ENCODE measurements at regions of chr11 and their contacts with region 1.

Region 1: GRCh38 chr11:9943386-9944110 is 279.7 kb downstream of the SWAP70 start:
- DNase-seq: peak; percentile 46
- H3K4me3 ChIP-seq: no peak overlapping the region
- H3K27ac ChIP-seq: no peak overlapping the region
- H3K4me1 ChIP-seq: no peaks in the 10 kb centered on the region
- H3K27me3 ChIP-seq: no peaks in the 10 kb centered on the region
- CTCF ChIP-seq: no peak

Region 2: GRCh38 chr11:9851366-9851765 is 92.2 kb before region 1 on chr11:
- CTCF ChIA-PET with region 1: no interaction called
- dilution Hi-C with region 1: no loop called
- in situ Hi-C with region 1: no loop called
- intact Hi-C with region 1: no loop called
- DNase-seq: peak; percentile 58
- H3K4me3 ChIP-seq: no peak overlapping the region
- H3K27ac ChIP-seq: no peak overlapping the region
- H3K4me1 ChIP-seq: no peaks in the 10 kb centered on the region
- H3K27me3 ChIP-seq: no peaks in the 10 kb centered on the region
- CTCF ChIP-seq: no peak

Region 3: DNA sequence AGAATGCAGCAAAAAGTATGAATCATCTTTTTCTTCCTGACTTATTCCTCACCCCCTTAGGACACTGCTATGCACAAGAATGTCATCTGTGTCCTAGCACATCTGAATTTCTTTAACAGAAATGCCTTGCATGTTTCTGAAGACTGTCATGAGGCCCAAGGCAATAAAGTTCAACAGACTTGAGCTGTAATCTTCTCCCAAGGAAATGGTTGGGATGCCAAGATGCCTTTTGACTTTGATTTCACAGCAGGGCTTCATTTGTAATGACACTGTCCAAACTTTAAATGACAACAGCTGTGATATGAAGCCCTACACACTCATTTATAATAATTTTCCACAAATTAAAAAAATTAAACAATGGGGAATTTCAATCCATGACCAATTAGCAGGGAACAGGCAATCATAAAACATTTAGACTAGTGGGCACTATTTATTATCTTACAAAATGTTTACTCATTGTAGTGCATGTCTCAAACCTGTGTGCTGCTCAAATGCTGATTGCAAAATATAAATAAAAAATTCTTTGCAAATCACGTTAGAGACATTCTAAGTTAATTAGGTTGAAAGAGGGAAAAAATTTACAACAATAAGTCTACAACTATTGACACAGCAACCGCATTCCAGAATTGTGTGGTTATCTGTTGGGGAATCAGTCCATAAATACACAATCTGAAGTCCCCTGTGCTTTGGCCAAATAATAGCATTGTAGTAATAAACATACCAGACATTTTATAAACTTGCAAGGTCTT is 37.3 kb before region 1 on chr11:
- CTCF ChIA-PET with region 1: no interaction called
- dilution Hi-C with region 1: no loop called
- in situ Hi-C with region 1: no loop called
- intact Hi-C with region 1: loop called (anchors 2 kb)
- DNase-seq: peak; percentile 81
- H3K4me3 ChIP-seq: no peak overlapping the region
- H3K27ac ChIP-seq: peak overlapping the region; percentile 73
- H3K4me1 ChIP-seq: peaks cover 31% of the 10 kb centered on the region
- H3K27me3 ChIP-seq: no peaks in the 10 kb centered on the region
- CTCF ChIP-seq: no peak

Region 4: GRCh38 chr11:10770626-10771254 is 827.2 kb after region 1 on chr11:
- CTCF ChIA-PET with region 1: no interaction called
- dilution Hi-C with region 1: no loop called
- in situ Hi-C with region 1: no loop called
- intact Hi-C with region 1: no loop called
- DNase-seq: peak; percentile 20
- H3K4me3 ChIP-seq: no peak overlapping the region
- H3K27ac ChIP-seq: no peak overlapping the region
- H3K4me1 ChIP-seq: no peaks in the 10 kb centered on the region
- H3K27me3 ChIP-seq: no peaks in the 10 kb centered on the region
- CTCF ChIP-seq: peak; percentile 78 to 79